GM10248 (cell line): ENCODE measurements at regions of chr6 and their contacts with region 1.

Region 1: GRCh38 chr6:32445321-32445854 is 5.7 kb downstream of the HLA-DRA start:
- DNase-seq: no peak
- CTCF ChIP-seq: no peak

Region 2: GRCh38 chr6:32424589-32425300 is 20.6 kb before region 1 on chr6:
- CTCF ChIA-PET with region 1: no interaction called
- POLR2A ChIA-PET with region 1: no interaction called
- DNase-seq: no peak
- CTCF ChIP-seq: no peak

Region 3: DNA sequence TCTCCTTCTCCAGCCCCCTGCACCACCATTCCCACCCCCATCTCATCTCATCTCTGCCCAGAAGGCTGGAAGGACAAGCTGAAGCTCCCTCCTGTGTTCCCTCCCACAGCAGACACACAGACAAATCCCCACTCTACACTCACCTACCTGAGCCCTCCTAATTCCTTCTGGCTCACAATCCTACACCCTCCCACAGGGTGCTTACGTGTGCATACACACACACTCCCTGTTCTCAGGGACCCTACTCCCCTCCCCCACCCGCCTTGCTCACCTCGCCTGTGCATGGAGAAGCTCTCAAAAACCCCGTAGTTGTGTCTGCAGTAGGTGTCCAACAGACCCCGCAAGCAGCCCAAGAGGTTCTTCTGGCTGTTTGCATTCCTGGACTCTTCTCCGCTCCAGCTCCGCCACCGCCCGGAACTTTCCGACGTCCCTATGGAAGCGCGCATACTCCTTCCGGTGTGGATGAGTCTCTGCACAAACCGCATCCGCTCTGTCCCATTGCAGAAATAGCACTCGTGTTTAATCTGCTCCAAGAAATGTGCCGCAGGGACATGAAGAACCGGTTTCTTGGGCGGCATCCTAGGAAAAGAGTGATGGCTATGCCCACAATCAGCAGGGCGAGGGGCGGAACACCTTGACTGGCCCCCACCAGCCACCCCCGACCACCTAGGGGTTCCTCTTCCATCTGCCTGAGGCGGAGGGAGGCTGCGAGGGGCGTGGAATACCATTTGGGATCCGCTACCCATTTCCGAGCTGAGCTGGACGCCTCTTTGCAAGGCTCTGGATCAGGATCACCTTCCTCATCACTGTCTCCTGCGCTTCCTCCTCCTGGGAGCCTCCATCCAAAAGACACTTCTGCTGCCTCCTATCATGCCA is 14.4 kb after region 1 on chr6:
- CTCF ChIA-PET with region 1: interaction called, 13 read pairs
- POLR2A ChIA-PET with region 1: interaction called, 6 read pairs
- DNase-seq: no peak
- CTCF ChIP-seq: no peak

Region 4: GRCh38 chr6:32472781-32473375 is 27.5 kb after region 1 on chr6:
- CTCF ChIA-PET with region 1: no interaction called
- POLR2A ChIA-PET with region 1: no interaction called
- DNase-seq: no peak
- CTCF ChIP-seq: no peak

Region 5: GRCh38 chr6:32718879-32719278 is 273.5 kb after region 1 on chr6:
- CTCF ChIA-PET with region 1: no interaction called
- POLR2A ChIA-PET with region 1: no interaction called
- DNase-seq: no peak
- CTCF ChIP-seq: no peak